Spleen (tissue), 13 donors: ENCODE measurements at regions of chr10 and their contacts with region 1.

Region 1: GRCh38 chr10:72133517-72133916 is 45.2 kb upstream of the SPOCK2 start:
- DNase-seq: no peak
- H3K4me3 ChIP-seq: no peak overlapping the region
- H3K27ac ChIP-seq: peak overlapping the region in 1 of 8 donors; percentile 18
- H3K4me1 ChIP-seq: peaks cover 0 to 41% (median 30%) of the 10 kb centered on the region in 6 donors
- H3K27me3 ChIP-seq: no peaks in the 10 kb centered on the region
- CTCF ChIP-seq: no peak
- POLR2A ChIP-seq: no peak

Region 2: GRCh38 chr10:72186258-72186981 is 52.9 kb after region 1 on chr10:
- intact Hi-C with region 1: loop called (anchors 10 kb)
- DNase-seq: no peak
- H3K4me3 ChIP-seq: no peak overlapping the region
- H3K27ac ChIP-seq: peak overlapping the region; percentile 58 to 86 (median 84)
- H3K4me1 ChIP-seq: peaks cover 2 to 23% (median 10%) of the 10 kb centered on the region in 6 donors
- H3K27me3 ChIP-seq: no peaks in the 10 kb centered on the region
- CTCF ChIP-seq: no peak
- POLR2A ChIP-seq: no peak